Mucosa of descending colon (tissue), 3 donors: ENCODE measurements at regions of chr1 and their contacts with region 1.

Region 1: GRCh38 chr1:8137481-8138244 is 111.6 kb upstream of the ERRFI1 start:
- DNase-seq: no peak
- ATAC-seq: peak; percentile 34
- H3K4me3 ChIP-seq: no peak overlapping the region
- H3K4me1 ChIP-seq: no peaks in the 10 kb centered on the region
- CTCF ChIP-seq: no peak

Region 2: GRCh38 chr1:8004803-8005554 is 132.7 kb before region 1 on chr1:
- intact Hi-C with region 1: no loop called
- DNase-seq: peak; percentile 34 to 73 (median 48)
- ATAC-seq: peak; percentile 56
- H3K4me3 ChIP-seq: no peak overlapping the region
- H3K4me1 ChIP-seq: no peaks in the 10 kb centered on the region
- CTCF ChIP-seq: no peak

Region 3: GRCh38 chr1:8026153-8026975 is 111.3 kb before region 1 on chr1 and contains the start of gene ERRFI1:
- intact Hi-C with region 1: loop called in 1 of 2 experiments (anchors 10 kb)
- DNase-seq: peak; percentile 95 to 97 (median 95)
- ATAC-seq: peak; percentile 94
- H3K4me3 ChIP-seq: peak within 1 kb of the TSS; percentile 79
- H3K4me1 ChIP-seq: peaks cover 20% of the 10 kb centered on the region
- CTCF ChIP-seq: no peak
- total RNA-seq, gene ERRFI1: 48.5 to 84.0 (median 50.2) TPM

Region 4: DNA sequence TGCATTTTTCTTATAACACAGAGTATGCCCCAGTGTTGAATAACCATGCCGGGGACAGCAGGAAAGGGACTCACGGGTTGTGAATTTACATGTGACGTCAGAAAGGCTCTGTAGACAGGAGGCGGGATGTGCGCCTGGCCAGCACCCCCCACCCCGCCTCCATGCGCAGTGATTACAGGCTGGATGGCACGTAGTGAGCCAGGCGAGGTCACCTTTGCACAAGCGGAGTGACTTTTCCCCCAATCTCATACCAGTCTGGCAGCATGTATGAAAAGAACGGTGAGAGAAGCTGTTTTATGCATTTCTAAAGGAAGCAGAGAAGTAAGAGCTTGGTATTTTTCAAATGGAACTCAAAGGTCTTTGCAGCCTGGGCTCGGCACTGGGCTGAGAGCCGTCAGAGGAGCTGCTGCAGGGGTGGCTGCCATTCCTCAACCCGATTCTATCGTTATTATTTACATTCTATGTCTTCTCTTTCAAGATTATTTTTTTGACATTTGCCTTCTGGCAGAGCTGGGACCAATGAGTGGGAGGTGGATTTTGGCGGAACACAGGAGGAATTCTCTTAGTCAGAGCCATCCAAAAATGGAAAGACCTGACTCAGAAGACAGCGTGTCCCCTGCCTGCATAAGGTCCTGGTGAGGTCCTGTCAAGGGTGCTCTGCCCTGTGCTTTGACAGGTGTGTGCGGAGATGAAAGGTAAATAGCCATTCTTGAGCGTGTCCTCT is 64.7 kb after region 1 on chr1:
- intact Hi-C with region 1: loop called in 1 of 2 experiments (anchors 10 kb)
- DNase-seq: peak; percentile 55 to 68 (median 61)
- ATAC-seq: peak; percentile 76
- H3K4me3 ChIP-seq: no peak overlapping the region
- H3K4me1 ChIP-seq: no peaks in the 10 kb centered on the region
- CTCF ChIP-seq: no peak

Region 5: GRCh38 chr1:8572106-8572505 is 434.4 kb after region 1 on chr1:
- intact Hi-C with region 1: no loop called
- DNase-seq: no peak
- ATAC-seq: no peak
- H3K4me3 ChIP-seq: no peak overlapping the region
- H3K4me1 ChIP-seq: no peaks in the 10 kb centered on the region
- CTCF ChIP-seq: no peak